Activated CD4-positive, alpha-beta T cell treated with anti-CD3 and anti-CD28 coated beads, Interleukin-2, amount 10 ng/mL, durations not matched to agents 7 days and 5 days (primary cell): ENCODE measurements at regions of chr1 and their contacts with region 1.

Region 1: DNA sequence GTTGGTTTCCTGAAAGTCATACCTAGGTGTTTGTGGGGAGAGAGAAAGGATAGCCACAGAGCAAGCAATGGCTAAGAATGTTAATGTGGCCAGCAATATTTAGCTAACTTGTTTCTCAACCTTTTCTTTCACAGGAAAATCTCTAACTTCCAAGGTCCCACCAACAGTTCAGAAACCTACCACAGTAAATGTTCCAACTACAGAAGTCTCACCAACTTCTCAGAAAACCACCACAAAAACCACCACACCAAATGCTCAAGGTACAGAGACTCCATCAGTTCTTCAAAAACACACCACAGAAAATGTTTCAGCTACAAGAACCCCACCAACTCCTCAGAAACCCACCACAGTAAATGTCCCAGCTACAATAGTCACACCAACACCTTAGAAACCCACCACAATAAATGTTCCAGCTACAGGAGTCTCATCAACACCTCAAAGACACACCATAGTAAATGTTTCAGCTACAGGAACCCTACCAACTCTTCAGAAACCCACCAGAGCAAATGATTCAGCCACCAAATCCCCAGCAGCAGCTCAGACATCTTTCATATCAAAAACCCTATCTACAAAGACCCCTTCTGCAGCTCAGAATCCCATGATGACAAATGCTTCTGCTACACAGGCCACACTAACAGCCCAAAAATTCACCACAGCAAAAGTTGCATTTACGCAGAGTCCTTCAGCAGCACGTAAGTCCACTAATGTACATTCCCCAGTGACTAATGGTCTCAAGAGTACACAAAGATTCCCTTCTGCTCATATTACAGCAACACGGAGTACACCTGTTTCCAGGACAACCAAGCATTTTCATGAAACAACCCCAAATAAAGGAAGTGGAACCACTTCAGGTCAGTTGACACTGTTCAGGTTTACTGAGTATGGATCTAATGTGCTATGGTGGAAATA is 15.3 kb downstream of the CD55 start:
- DNase-seq: peak; percentile 75
- H3K4me3 Mint-ChIP-seq: peak overlapping the region; percentile 33
- H3K27ac Mint-ChIP-seq: peak overlapping the region; percentile 90
- H3K4me1 Mint-ChIP-seq: peaks cover 68% of the 10 kb centered on the region
- H3K27me3 Mint-ChIP-seq: no peaks in the 10 kb centered on the region

Region 2: GRCh38 chr1:207309775-207310273 is 27.0 kb before region 1 on chr1:
- CTCF ChIA-PET with region 1: no interaction called
- POLR2A ChIA-PET with region 1: no interaction called
- DNase-seq: no peak
- H3K4me3 Mint-ChIP-seq: no peak overlapping the region
- H3K27ac Mint-ChIP-seq: peak overlapping the region; percentile 79
- H3K4me1 Mint-ChIP-seq: peaks cover 20% of the 10 kb centered on the region
- H3K27me3 Mint-ChIP-seq: no peaks in the 10 kb centered on the region

Region 3: GRCh38 chr1:207321079-207321789 is 15.6 kb before region 1 on chr1 and contains the start of gene CD55:
- CTCF ChIA-PET with region 1: interaction called, 19 read pairs
- POLR2A ChIA-PET with region 1: interaction called, 7 read pairs
- DNase-seq: peak; percentile 100
- H3K4me3 Mint-ChIP-seq: peak within 1 kb of the TSS; percentile 83
- H3K27ac Mint-ChIP-seq: peak within 1 kb of the TSS; percentile 100
- H3K4me1 Mint-ChIP-seq: peaks cover 43% of the 10 kb centered on the region
- H3K27me3 Mint-ChIP-seq: no peaks in the 10 kb centered on the region
- total RNA-seq, gene CD55: 92.0 to 117 TPM

Region 4: DNA sequence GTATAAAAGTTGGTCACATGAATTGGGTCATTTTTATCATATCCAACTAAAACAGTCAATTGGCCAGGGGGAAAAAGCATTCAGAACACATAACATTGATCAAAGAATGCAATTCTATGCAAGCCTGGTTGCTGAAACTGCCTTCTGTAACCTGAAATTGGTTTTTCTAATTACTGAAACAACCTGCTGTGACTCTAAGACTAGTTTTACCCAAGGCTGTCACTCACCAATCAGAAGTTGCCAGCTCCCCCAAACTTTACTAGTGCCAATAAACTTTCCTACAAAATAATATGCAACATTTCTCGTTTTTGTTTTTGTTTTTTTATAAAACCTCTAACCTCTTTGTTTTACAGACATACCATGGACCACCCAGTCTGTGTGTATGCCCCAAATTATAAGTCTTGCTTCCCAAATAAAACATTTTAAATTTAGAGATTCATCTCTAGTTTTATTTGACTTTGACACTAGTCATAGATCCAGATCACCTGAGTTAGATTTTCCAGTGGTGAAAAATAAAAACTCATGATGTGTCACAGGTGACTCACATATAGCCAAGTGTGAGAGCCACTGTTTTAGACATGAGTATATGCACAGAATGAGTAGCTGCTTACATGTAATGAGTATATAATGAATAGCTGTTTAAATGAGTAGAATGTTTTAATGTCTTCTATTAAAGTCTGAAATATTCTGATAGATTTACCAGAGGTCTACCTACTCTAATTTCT is 53.1 kb after region 1 on chr1:
- CTCF ChIA-PET with region 1: no interaction called
- POLR2A ChIA-PET with region 1: no interaction called
- DNase-seq: no peak
- H3K4me3 Mint-ChIP-seq: no peak overlapping the region
- H3K27ac Mint-ChIP-seq: no peak overlapping the region
- H3K4me1 Mint-ChIP-seq: no peaks in the 10 kb centered on the region
- H3K27me3 Mint-ChIP-seq: no peaks in the 10 kb centered on the region